ACHN (cell line): ENCODE measurements at regions of chr4 and their contacts with region 1.

Region 1: GRCh38 chr4:82201805-82202641 is 171.8 kb downstream of the HNRNPD start:
- DNase-seq: peak; percentile 48

Region 2: DNA sequence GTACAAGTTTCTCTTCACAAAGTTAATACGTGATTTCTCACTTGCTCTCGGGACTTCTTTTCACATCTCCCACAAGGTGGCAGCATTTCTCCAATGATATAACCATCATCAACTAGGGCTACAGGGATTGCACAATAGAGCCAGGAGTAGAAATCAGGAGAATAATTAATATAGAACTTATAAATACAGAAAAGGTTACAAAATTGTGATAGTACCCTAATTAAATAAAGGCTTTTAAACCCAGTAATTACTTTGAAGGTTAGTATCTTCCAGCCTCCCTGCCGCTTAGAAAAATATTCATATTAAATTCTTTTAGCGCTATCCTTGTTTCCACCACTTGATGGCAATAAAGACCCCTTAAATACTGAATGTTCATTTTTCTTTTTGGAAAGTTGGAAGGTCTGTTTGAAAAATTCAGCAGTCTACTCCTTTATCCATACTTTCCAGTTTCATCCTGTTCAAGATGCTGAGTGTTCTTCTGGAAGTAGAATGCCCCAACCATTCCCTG is 796.1 kb before region 1 on chr4:
- in situ Hi-C with region 1: loop called (anchors 25 kb)
- DNase-seq: peak; percentile 71

Region 3: DNA sequence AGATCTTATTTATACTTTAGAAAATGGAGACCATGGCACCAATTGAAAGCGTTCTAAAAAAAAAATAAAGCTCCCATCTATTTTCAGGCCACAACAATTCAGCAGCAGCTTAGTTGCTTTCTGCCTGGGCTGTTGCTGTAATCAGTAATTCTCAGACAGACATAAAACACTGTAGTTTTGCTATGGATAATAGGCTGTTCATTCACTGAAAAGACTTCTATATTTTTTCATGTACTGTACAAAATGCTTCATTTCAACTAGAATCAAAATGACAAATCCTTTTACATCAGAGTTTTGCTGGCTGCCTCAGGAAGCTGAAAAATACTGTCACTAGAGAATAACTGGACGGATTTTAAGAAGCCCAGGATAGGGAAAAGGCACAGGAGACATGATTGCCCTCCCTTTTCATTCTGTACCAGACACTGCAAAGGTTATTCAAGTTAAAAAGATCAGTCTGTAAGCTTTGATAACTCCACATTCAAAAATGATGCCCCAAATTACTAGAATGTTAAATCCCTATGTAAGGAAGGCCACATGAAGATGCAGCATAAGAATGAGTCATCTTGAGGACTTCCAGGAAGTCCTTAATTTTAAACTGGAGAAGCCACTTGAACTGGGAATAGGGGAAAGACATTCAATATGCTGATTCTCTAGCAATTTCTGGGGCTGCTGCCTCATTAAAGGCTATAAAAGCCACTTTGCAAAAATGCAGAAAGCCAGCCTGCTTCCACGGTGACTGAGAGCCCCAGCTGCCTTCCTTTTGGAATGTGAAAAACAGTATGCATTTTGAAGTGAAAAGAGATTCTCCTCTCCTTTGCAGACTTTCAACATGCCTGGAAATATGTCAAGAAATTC is 327.1 kb before region 1 on chr4:
- in situ Hi-C with region 1: no loop called
- DNase-seq: no peak